PC-3 (cell line): ENCODE measurements at regions of chr15 and their contacts with region 1.

Region 1: DNA sequence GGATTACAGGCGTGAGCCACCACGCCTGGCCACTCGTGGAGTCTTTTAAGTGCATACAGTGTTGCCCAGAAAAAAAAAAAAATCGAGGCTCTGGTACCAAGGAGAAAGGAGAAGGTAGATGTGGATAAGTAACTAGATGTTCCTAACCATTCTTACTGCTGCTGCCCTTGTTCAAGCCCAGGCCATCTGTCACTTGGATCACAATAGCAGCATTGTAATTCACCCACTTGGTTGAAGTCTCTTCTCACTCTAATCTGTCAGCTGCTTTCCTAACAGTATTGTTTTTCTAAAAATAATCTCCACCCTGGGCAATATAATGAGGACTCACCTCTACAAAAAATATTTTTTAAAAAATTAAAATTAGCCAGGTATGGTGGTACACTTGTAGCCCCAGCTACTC is 58.0 kb upstream of the CRTC3 start:
- DNase-seq: no peak
- ATAC-seq: no peak
- H3K4me3 ChIP-seq: no peak overlapping the region
- H3K27ac ChIP-seq: no peak overlapping the region
- H3K4me1 ChIP-seq: no peaks in the 10 kb centered on the region
- H3K27me3 ChIP-seq: no peaks in the 10 kb centered on the region
- CTCF ChIP-seq: no peak

Region 2: DNA sequence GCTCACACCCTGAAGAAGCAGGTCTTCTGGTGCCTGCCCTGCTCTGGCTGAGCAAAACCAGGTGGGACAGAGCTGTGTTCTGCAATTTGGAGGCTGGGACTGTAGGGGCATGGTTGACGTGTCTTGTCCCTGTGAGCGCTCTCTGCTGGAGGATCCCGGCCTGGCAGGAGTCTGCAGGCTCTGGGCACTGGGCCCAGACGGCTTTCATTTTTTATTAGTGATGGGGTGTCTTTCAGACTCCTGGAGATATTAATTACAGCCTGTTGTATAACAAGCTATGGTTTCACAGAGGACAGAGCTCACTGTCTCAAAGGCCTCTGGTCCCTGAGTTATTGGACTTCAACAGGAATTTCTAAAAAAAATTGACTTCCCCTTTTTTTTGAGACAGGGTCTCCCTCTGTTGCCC is 500.2 kb before region 1 on chr15:
- CTCF ChIA-PET with region 1: no interaction called
- POLR2A ChIA-PET with region 1: no interaction called
- intact Hi-C with region 1: no loop called
- DNase-seq: peak; percentile 79
- ATAC-seq: peak; percentile 97
- H3K4me3 ChIP-seq: no peak overlapping the region
- H3K27ac ChIP-seq: no peak overlapping the region
- H3K4me1 ChIP-seq: no peaks in the 10 kb centered on the region
- H3K27me3 ChIP-seq: no peaks in the 10 kb centered on the region
- CTCF ChIP-seq: peak; percentile 79

Region 3: GRCh38 chr15:90300988-90301706 is 170.6 kb before region 1 on chr15:
- CTCF ChIA-PET with region 1: interaction called, 11 read pairs
- POLR2A ChIA-PET with region 1: no interaction called
- intact Hi-C with region 1: no loop called
- DNase-seq: peak; percentile 64
- ATAC-seq: no peak
- H3K4me3 ChIP-seq: no peak overlapping the region
- H3K27ac ChIP-seq: no peak overlapping the region
- H3K4me1 ChIP-seq: no peaks in the 10 kb centered on the region
- H3K27me3 ChIP-seq: no peaks in the 10 kb centered on the region
- CTCF ChIP-seq: peak; percentile 85

Region 4: GRCh38 chr15:90665288-90666134 is 193.7 kb after region 1 on chr15:
- CTCF ChIA-PET with region 1: no interaction called
- POLR2A ChIA-PET with region 1: no interaction called
- intact Hi-C with region 1: no loop called
- DNase-seq: peak; percentile 65
- ATAC-seq: peak; percentile 90
- H3K4me3 ChIP-seq: peak overlapping the region; percentile 88
- H3K27ac ChIP-seq: peak overlapping the region; percentile 66
- H3K4me1 ChIP-seq: peaks cover 28% of the 10 kb centered on the region
- H3K27me3 ChIP-seq: no peaks in the 10 kb centered on the region
- CTCF ChIP-seq: no peak